Activated CD4-positive, alpha-beta memory T cell treated with anti-CD3 and anti-CD28 coated beads, Interleukin-2, amount 10 ng/mL, durations not matched to agents 7 days and 5 days (primary cell): ENCODE measurements at regions of chr6 and their contacts with region 1.

Region 1: GRCh38 chr6:31702819-31703522 is at the start of gene ABHD16A:
- DNase-seq: peak; percentile 98
- H3K4me3 Mint-ChIP-seq: peak within 1 kb of the TSS; percentile 98
- H3K27ac Mint-ChIP-seq: peak within 1 kb of the TSS; percentile 95
- H3K4me1 Mint-ChIP-seq: peaks cover 32% of the 10 kb centered on the region
- H3K27me3 Mint-ChIP-seq: no peaks in the 10 kb centered on the region
- total RNA-seq, gene ABHD16A: 53.1 to 55.0 TPM

Region 2: DNA sequence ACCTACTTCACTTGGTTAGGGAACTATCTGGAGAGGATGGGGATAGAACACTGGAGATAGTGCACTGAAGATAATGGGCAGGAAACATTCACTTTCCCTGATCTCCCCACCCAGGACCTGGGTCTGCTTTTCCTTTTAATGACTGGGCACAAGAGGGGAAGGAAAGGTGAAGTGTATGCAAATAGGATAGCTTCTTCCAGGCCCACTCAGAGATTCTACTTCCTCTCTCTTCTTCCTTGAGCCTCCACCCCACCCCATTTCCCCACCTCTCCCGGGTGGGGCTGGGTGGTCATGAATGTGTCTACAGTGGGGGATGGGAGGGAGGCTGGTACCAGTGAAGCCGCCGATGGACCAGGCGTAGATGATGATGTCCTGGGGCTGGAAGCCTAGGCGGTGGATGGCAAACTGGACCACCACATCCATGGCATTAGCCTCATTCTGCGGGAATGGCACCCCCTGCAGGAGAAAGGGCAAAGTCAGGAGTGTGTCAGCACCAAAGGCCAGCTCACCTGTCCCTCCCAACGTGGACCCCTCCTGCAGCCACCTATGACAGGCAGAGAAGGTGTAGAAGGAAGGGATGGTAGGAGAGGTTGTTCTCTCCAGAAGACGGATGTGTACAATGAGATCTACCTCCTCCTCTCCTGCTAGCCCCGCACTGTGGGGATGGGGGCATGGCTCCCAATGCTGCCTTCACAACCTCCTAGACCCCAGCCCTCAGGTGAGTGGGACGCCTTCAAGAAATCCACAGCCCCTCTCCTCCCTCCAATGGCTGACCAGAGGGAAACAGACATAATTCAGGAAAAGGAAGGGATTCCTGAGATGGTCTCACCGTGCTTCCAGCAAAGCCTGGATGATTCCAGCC is 13.5 kb before region 1 on chr6:
- CTCF ChIA-PET with region 1: no interaction called
- POLR2A ChIA-PET with region 1: interaction called, 15 read pairs
- DNase-seq: no peak
- H3K4me3 Mint-ChIP-seq: no peak overlapping the region
- H3K27ac Mint-ChIP-seq: no peak overlapping the region
- H3K4me1 Mint-ChIP-seq: peaks cover 3% of the 10 kb centered on the region
- H3K27me3 Mint-ChIP-seq: no peaks in the 10 kb centered on the region

Region 3: GRCh38 chr6:31729515-31729978 is 26.6 kb after region 1 on chr6:
- CTCF ChIA-PET with region 1: interaction called, 3 read pairs
- POLR2A ChIA-PET with region 1: interaction called, 73 read pairs
- DNase-seq: peak; percentile 82
- H3K4me3 Mint-ChIP-seq: peak overlapping the region; percentile 88
- H3K27ac Mint-ChIP-seq: peak overlapping the region; percentile 82
- H3K4me1 Mint-ChIP-seq: peaks cover 79% of the 10 kb centered on the region
- H3K27me3 Mint-ChIP-seq: no peaks in the 10 kb centered on the region